ENCODE measurements at regions of chr3 and their contacts with region 1.

Region 1: GRCh38 chr3:185308126-185308754 is 54.4 kb upstream of the EHHADH start:
- DNase-seq: peak; percentile 45
- ATAC-seq: peak; percentile 80
- H3K4me3 ChIP-seq: no peak overlapping the region
- H3K27ac ChIP-seq: no peak overlapping the region; the same call in 1 of the 2 replicates
- H3K4me1 ChIP-seq: no peaks in the 10 kb centered on the region
- H3K27me3 ChIP-seq: no peaks in the 10 kb centered on the region
- CTCF ChIP-seq: peak; percentile 86

Region 2: DNA sequence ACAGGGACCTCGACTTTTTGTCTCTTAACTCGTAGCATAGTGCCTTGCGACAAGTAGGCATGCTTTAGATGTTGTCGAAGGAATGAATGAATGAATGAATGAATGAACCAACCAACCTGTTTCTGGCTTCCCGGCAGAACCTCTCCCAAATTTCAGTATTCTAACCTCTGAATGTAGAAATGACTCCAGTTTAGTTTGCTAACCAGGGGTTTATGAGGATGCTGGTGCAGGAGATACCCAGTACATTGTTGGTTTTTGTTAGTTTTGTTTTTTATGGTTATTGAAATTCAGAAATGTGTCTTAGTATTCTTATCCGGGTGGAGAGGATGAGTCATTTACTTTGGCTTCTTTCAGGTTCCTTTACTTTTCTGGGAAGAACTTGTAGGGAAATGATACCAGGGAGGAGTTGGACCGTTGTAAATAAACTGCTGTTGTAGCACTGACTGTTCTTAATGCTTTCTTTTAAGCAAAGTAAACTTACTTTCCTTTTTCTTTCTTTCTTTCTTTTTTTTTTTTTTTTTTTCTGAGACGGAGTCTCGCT is 24.8 kb before region 1 on chr3:
- CTCF ChIA-PET with region 1: interaction called, 3 read pairs
- POLR2A ChIA-PET with region 1: interaction called, 14 read pairs
- in situ Hi-C with region 1: no loop called
- intact Hi-C with region 1: no loop called
- DNase-seq: no peak
- ATAC-seq: peak; percentile 6
- H3K4me3 ChIP-seq: peak overlapping the region; percentile 65 to 93
- H3K27ac ChIP-seq: peak overlapping the region; percentile 97
- H3K4me1 ChIP-seq: 0 out of 2 replicates have a peak, but pooled peaks cover 7% of the 10 kb centered on the region
- H3K27me3 ChIP-seq: no peaks in the 10 kb centered on the region
- CTCF ChIP-seq: no peak

Region 3: DNA sequence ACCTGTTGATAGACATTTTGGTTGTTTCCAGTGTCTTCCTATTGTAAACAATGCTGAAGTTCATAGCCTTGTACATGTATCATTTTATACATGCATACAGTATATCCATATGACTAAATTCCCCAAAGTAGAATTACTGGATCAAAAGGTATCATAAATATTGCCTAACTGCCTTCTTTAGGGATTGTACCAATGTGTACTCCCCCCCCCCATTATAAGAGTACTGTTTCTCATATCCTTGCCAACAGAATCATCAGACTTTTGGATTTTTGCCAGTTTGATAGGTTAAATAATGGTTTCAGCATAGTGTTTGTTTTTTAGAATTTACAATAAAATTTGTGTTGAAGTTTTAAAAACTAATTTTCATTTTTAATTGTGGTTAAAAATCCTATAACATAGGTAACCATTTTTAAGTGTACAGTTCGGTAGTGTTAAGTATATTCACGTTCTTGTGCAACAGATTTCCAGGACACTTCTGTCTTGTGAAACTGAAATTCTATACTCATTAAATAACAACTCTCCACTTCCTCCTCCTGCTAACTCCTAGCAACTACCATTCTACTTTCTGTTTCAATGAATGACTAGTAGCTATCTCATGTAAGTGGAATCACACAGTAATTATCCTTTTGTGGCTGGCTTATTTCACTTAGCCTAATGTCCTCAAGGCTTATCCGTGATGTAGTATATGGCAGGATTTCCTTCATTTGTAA is 23.9 kb after region 1 on chr3:
- CTCF ChIA-PET with region 1: no interaction called
- POLR2A ChIA-PET with region 1: interaction called, 13 read pairs
- in situ Hi-C with region 1: no loop called
- intact Hi-C with region 1: no loop called
- DNase-seq: no peak
- ATAC-seq: no peak
- H3K4me3 ChIP-seq: no peak overlapping the region
- H3K27ac ChIP-seq: peak overlapping the region; percentile 60; the same call in 1 of the 2 replicates
- H3K4me1 ChIP-seq: peaks cover 29% of the 10 kb centered on the region
- H3K27me3 ChIP-seq: no peaks in the 10 kb centered on the region
- CTCF ChIP-seq: no peak

Measured in Panc1 (cell line).